Cardiac septum (tissue), 1 donor: ENCODE measurements at regions of chr4 and their contacts with region 1.

Region 1: GRCh38 chr4:25925486-25926201 is 11.6 kb downstream of the SMIM20 start:
- DNase-seq: no peak

Region 2: DNA sequence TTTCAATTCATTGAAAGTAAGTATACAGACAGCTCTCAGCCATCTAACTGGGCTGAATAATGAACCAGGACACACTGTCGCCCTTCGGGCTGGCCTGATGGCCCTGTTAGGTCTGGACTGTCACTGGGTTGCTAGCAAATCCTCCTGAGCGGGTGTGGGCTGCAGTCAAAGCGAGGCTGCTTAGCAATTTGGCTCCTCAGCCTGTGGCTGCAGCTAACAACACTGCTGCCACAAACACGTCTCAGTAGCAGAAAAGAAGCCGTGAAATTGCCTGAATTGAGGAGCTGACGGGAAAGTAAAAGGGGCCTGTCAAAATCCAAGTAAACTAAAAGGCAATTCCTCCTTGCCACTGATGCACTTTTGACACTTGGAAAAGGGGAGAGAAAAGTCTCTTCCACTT is 61.2 kb after region 1 on chr4:
- intact Hi-C with region 1: loop called (anchors 5 kb)
- DNase-seq: no peak

Region 3: DNA sequence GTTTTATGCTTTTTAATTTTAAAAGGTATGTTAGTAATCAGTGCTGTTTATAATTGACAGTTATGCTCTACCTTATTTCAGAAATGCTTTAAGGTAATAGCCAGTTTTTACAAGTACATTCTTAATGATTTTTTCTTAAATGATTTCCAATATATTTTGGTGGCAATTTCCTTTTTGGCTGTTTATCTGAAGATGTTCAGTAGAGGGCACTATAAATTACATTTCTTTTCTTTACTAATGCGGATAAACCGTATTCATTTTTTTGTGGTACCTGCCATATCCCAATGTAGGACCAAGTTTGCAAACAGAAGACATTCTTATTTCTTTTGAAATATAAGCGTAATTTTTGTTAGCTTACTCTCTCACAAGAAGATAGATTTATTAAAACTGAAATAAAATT is 499.2 kb after region 1 on chr4:
- intact Hi-C with region 1: loop called (anchors 10 kb)
- DNase-seq: no peak